Natural killer cell (primary cell): ENCODE measurements at regions of chr6 and their contacts with region 1.

Region 1: DNA sequence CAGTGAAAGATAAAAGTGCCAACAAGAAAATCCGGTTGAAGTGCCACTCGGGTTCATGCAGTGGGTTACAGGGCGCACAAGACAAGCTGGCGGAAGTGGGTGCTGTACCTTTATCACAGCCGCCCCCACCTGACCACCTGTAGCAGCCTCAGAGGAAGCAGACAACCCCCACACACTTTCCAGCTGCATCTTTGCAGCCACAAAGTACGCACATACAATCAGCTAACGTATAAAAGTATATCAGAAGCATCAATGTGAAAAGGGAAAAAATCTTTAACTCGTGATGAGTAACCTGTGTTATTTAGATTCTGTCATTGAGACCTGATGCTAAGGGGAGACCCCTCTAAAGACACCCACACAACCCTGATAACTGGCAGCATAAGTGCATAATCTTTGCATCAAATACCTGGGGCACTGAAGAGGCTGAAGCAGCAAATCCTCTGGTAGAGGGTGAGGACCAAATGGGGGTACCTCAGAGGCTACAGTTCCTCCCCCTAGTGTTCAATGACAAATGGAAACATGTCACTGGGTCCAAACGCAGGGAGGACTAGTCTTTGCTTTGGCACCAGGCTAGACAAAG is 22.1 kb downstream of the BACH2 start:
- DNase-seq: peak; percentile 76 to 97
- ATAC-seq: peak; percentile 86 to 96 (median 94)
- H3K4me3 ChIP-seq: no peak overlapping the region
- H3K4me3 Mint-ChIP-seq: peak overlapping the region; percentile 68
- H3K27ac ChIP-seq: peak overlapping the region; percentile 92
- H3K27ac Mint-ChIP-seq: peak overlapping the region; percentile 77 to 87
- H3K4me1 ChIP-seq: peaks cover 32% of the 10 kb centered on the region
- H3K4me1 Mint-ChIP-seq: peaks cover 17 to 30% of the 10 kb centered on the region in 2 donors
- H3K27me3 ChIP-seq: no peaks in the 10 kb centered on the region
- H3K27me3 Mint-ChIP-seq: peaks cover 0 to 12% of the 10 kb centered on the region in 2 donors
- CTCF ChIP-seq: no peak

Region 2: GRCh38 chr6:90179190-90180169 is 95.1 kb before region 1 on chr6:
- intact Hi-C with region 1: loop called (anchors 5 kb)
- DNase-seq: peak in 1 of 2 donors; percentile 70
- ATAC-seq: no peak
- H3K4me3 ChIP-seq: no peak overlapping the region
- H3K4me3 Mint-ChIP-seq: no peak overlapping the region
- H3K27ac ChIP-seq: no peak overlapping the region
- H3K27ac Mint-ChIP-seq: no peak overlapping the region
- H3K4me1 ChIP-seq: peaks cover 30% of the 10 kb centered on the region
- H3K4me1 Mint-ChIP-seq: peaks cover 27 to 39% of the 10 kb centered on the region in 2 donors
- H3K27me3 ChIP-seq: no peaks in the 10 kb centered on the region
- H3K27me3 Mint-ChIP-seq: no peaks in the 10 kb centered on the region
- CTCF ChIP-seq: peak; percentile 76

Region 3: GRCh38 chr6:90216072-90216977 is 58.2 kb before region 1 on chr6:
- intact Hi-C with region 1: loop called (anchors 1 kb)
- DNase-seq: peak in 1 of 2 donors; percentile 81
- ATAC-seq: peak in 1 of 3 donors; percentile 20
- H3K4me3 ChIP-seq: no peak overlapping the region
- H3K4me3 Mint-ChIP-seq: no peak overlapping the region
- H3K27ac ChIP-seq: peak overlapping the region; percentile 82
- H3K27ac Mint-ChIP-seq: peak overlapping the region in 1 of 2 donors; percentile 63
- H3K4me1 ChIP-seq: peaks cover 36% of the 10 kb centered on the region
- H3K4me1 Mint-ChIP-seq: peaks cover 0 to 9% of the 10 kb centered on the region in 2 donors
- H3K27me3 ChIP-seq: no peaks in the 10 kb centered on the region
- H3K27me3 Mint-ChIP-seq: no peaks in the 10 kb centered on the region
- CTCF ChIP-seq: no peak

Region 4: DNA sequence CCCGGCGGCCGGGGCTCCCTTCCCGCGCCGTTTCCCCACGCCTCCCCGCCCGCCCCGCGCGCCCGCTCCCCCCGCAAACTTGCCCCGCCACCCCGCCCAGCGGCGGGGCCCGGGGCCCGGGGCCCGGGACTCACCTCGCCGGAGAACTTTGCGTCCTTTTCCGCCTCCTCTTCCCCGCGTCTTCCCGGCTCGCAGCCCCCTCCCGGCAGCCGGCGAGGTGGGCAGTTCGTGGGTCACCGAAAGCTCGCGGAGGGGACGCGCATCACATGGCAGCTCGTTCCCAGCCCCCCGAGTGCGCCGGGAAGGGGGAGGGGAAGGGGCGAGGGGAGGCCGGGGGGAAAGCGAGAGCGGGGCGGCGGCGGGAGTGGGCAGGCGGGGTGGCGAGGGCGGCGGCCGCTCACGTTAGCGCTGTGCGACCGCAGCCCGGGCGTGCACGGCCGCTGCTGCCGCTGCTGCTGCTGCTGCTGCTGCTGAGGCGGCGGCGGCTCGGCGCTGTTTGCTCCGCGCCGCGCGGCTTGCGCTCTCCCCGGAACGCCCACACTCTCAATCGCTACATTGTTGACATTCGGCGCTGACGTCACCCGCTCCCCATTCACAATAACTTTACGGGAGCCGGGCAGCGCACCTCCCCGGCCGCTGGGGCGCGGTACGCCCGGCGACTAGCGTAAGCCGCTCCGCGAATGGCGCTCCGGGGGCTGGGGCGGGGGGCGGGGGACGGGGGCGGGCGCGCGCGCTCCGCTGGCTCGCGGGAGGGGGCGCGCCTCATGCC is 22.0 kb after region 1 on chr6 and contains the start of gene BACH2:
- intact Hi-C with region 1: loop called (anchors 1 kb)
- DNase-seq: peak; percentile 84 to 97
- ATAC-seq: peak; percentile 68 to 81 (median 72)
- H3K4me3 ChIP-seq: peak within 1 kb of the TSS; percentile 67
- H3K4me3 Mint-ChIP-seq: peak within 1 kb of the TSS; percentile 94
- H3K27ac ChIP-seq: peak within 1 kb of the TSS; percentile 79
- H3K27ac Mint-ChIP-seq: peak within 1 kb of the TSS; percentile 83 to 86
- H3K4me1 ChIP-seq: peaks cover 19% of the 10 kb centered on the region
- H3K4me1 Mint-ChIP-seq: peaks cover 11 to 21% of the 10 kb centered on the region in 2 donors
- H3K27me3 ChIP-seq: peaks cover 3% of the 10 kb centered on the region
- H3K27me3 Mint-ChIP-seq: peaks cover 13 to 30% of the 10 kb centered on the region in 2 donors
- CTCF ChIP-seq: no peak
- total RNA-seq, gene BACH2: 32.1 to 37.8 (median 32.7) TPM